ENCODE measurements at regions of chr10 and their contacts with region 1.

Region 1: DNA sequence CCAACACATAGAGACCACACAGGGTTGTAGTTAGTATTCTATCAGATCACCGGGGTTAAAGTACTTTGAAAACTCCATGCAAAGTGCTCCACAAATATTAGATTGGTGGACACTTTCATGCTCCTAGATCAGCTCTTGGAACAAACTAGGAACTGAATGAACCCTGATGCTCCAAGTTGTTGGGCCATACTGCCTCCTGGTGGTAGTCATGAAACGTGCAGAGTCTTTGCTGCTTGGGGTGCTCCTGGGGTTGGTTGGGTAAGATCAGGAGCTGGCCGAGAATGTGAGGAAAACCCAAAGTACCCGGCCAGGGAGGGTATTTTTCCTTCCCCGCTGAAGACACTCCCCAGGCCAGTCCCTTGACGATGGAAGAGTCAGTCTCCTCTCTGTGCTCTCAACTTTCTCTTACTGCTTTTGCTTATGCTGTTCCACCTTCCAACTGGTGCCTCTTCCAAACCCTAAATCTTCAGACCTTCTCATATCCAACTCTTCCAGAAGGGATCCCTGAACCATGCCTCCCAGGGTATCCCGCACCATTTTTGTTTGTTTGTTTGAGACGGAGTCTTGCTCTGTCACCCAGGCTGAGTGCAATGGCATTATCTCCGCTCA is 920 bp upstream of the RPEL1 start:
- DNase-seq: peak; percentile 46
- H3K4me3 Mint-ChIP-seq: no peak overlapping the region
- H3K27ac Mint-ChIP-seq: no peak overlapping the region
- H3K4me1 Mint-ChIP-seq: peaks cover 14% of the 10 kb centered on the region
- H3K27me3 Mint-ChIP-seq: no peaks in the 10 kb centered on the region

Region 2: DNA sequence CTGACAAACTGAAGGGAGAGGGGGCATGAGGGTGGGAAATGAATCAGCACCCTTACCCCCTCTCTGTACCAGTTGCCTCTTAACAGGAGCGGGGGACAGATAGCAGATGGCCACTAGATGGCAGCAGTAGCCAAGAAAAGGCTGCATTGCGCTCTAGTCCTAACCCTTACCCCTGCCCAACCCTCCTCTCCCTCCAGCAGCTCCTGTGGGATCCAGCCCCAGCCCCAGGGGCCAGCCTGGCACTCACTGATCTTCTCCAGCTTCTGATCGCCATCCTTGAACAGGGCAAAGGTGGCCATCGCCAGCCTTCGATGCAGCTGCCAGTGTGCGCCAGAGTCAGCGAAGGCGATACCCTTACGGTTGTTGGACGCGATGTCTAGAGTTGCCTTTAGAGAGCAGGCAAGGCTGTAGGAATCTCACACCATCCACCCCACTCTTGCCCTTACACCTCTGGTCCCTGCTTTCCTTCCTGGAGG is 409.7 kb before region 1 on chr10:
- intact Hi-C with region 1: loop called (anchors 10 kb)
- DNase-seq: peak; percentile 58
- H3K4me3 Mint-ChIP-seq: no peak overlapping the region
- H3K27ac Mint-ChIP-seq: no peak overlapping the region
- H3K4me1 Mint-ChIP-seq: peaks cover 5% of the 10 kb centered on the region
- H3K27me3 Mint-ChIP-seq: peaks cover 11% of the 10 kb centered on the region

Region 3: GRCh38 chr10:103069453-103070331 is 175.1 kb before region 1 on chr10:
- intact Hi-C with region 1: loop called (anchors 2 kb)
- DNase-seq: peak; percentile 58
- H3K4me3 Mint-ChIP-seq: no peak overlapping the region
- H3K27ac Mint-ChIP-seq: peak overlapping the region; percentile 78
- H3K4me1 Mint-ChIP-seq: peaks cover 26% of the 10 kb centered on the region
- H3K27me3 Mint-ChIP-seq: no peaks in the 10 kb centered on the region

Region 4: DNA sequence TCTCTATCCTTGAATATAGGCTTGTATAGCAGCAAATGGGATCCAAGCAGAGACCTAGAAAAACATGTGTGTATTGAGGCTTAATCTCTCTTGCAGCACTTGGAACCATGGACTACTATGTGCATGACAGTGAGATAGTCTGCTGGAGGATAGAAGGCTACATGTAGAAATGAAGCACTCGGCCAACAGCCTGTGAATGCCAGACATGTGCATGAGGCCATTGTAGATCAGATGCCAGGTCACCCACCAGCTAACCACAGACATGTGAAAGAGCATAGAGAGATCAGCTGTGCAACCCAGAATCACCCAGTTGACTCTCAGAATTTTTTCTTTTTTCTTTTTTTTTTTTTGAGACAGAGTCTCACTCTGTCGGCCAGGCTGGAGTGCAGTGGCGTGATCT is 142.6 kb before region 1 on chr10:
- intact Hi-C with region 1: loop called (anchors 5 kb)
- DNase-seq: no peak
- H3K4me3 Mint-ChIP-seq: no peak overlapping the region
- H3K27ac Mint-ChIP-seq: no peak overlapping the region
- H3K4me1 Mint-ChIP-seq: peaks cover 4% of the 10 kb centered on the region
- H3K27me3 Mint-ChIP-seq: no peaks in the 10 kb centered on the region

Region 5: GRCh38 chr10:103192451-103193106 is 52.2 kb before region 1 on chr10:
- intact Hi-C with region 1: loop called (anchors 2 kb)
- DNase-seq: peak; percentile 68
- H3K4me3 Mint-ChIP-seq: peak overlapping the region; percentile 99
- H3K27ac Mint-ChIP-seq: peak overlapping the region; percentile 99
- H3K4me1 Mint-ChIP-seq: peaks cover 30% of the 10 kb centered on the region
- H3K27me3 Mint-ChIP-seq: no peaks in the 10 kb centered on the region